ENCODE measurements at regions of chr12 and their contacts with region 1.

Region 1: GRCh38 chr12:46661110-46661845 is 164.5 kb downstream of the SLC38A4 start:
- DNase-seq: peak in 4 of 5 donors; percentile 48 to 55 (median 52)
- H3K4me3 ChIP-seq: no peak overlapping the region
- H3K4me3 Mint-ChIP-seq: no peak overlapping the region
- H3K27ac ChIP-seq: no peak overlapping the region
- H3K27ac Mint-ChIP-seq: peak overlapping the region in 1 of 7 donors; percentile 43
- H3K4me1 ChIP-seq: peaks cover 14% of the 10 kb centered on the region
- H3K4me1 Mint-ChIP-seq: peaks cover 16 to 27% (median 22%) of the 10 kb centered on the region in 4 donors
- H3K27me3 ChIP-seq: no peaks in the 10 kb centered on the region
- H3K27me3 Mint-ChIP-seq: no peaks in the 10 kb centered on the region

Region 2: GRCh38 chr12:46153268-46153872 is 507.9 kb before region 1 on chr12:
- CTCF ChIA-PET with region 1: interaction called, 3 read pairs
- POLR2A ChIA-PET with region 1: no interaction called
- intact Hi-C with region 1: loop called (anchors 1 kb)
- DNase-seq: peak in 4 of 5 donors; percentile 38 to 50 (median 45)
- H3K4me3 ChIP-seq: no peak overlapping the region
- H3K4me3 Mint-ChIP-seq: no peak overlapping the region
- H3K27ac ChIP-seq: no peak overlapping the region
- H3K27ac Mint-ChIP-seq: no peak overlapping the region
- H3K4me1 ChIP-seq: peaks cover 11% of the 10 kb centered on the region
- H3K4me1 Mint-ChIP-seq: peaks cover 0 to 11% (median 9%) of the 10 kb centered on the region in 4 donors
- H3K27me3 ChIP-seq: no peaks in the 10 kb centered on the region
- H3K27me3 Mint-ChIP-seq: peaks cover under 1 to 4% of the 10 kb centered on the region in 2 donors

Region 3: DNA sequence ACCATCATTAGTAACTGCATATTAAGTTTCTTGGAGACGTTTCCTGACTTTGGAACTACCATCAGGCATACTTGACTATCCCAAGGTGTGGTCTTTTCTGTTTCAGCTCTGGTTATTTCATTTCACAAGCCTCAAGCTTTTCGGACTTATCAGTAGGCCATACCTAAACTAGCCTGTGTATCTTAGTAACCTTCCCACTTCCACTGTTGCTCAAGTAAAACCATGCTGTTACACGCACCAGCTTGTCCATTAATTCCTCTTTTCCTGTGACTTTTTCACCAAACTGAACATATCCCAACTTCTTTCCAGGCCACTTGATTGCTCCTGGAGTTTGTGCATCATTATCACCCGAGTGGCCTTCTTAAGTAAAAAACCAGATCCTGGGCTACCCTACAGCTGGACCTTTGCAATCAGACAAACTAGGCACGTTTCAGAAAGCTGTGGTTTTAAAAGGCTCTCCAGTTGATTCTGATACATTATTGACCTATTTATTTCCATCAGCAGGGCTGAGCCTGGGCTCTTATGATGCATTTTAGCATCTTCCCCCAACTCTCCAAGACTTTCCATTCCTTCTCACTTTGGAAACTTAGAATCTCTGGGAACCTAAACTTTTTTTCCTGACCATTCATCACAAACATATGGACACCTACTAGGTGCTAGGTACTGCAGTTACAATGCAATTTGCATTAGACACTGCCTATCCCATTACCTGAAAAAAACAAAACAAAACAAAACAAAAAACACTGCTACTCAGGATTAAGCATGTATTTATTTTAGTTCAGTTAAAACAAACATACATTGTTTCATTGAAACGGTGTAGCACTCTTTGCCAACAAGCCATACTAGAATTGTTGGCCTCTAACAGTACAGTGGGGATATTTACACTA is 303.6 kb before region 1 on chr12:
- CTCF ChIA-PET with region 1: interaction called, 15 read pairs
- POLR2A ChIA-PET with region 1: interaction called, 4 read pairs
- intact Hi-C with region 1: loop called (anchors 1 kb)
- DNase-seq: no peak
- H3K4me3 ChIP-seq: no peak overlapping the region
- H3K4me3 Mint-ChIP-seq: no peak overlapping the region
- H3K27ac ChIP-seq: no peak overlapping the region
- H3K27ac Mint-ChIP-seq: peak overlapping the region in 5 of 7 donors; percentile 4 to 77 (median 5)
- H3K4me1 ChIP-seq: peaks cover 20% of the 10 kb centered on the region
- H3K4me1 Mint-ChIP-seq: peaks cover 13 to 48% (median 34%) of the 10 kb centered on the region in 4 donors
- H3K27me3 ChIP-seq: no peaks in the 10 kb centered on the region
- H3K27me3 Mint-ChIP-seq: no peaks in the 10 kb centered on the region

Region 4: DNA sequence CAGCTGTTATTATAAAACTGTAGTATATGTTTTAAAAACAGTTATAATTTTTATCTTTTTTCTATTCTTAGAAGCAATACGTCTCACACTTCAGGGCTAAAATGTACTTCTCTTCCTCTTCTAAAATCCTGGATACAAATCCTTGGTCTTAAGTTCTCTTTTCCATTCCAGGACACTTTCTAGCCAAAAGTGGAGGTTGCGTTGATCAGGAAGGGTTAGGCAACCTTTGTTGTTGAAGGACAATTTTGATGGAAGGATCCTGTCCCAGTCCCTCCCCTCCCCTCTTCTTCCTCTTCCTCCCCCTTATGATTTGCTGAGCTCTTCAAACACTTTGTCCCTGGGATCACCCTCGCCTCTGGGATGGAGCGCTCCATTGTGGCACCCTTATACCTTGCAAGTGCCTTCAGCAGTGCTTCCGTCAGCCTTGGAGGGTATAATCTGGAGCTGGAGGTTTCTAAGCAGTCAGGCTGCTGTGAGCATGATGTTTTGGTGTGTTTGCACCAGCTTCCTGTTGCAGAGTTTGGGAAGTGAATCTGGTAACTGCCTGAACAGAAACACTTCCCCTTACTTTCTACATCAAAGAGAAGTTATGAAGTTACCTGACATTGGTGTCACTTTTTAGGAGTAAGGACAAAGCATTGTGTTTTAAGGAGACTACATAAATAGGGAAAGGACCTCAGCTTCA is 201.3 kb before region 1 on chr12:
- CTCF ChIA-PET with region 1: interaction called, 5 read pairs
- POLR2A ChIA-PET with region 1: interaction called, 3 read pairs
- intact Hi-C with region 1: loop called (anchors 2 kb)
- DNase-seq: no peak
- H3K4me3 ChIP-seq: no peak overlapping the region
- H3K4me3 Mint-ChIP-seq: peak overlapping the region in 7 of 8 donors; percentile 78 to 92 (median 80)
- H3K27ac ChIP-seq: no peak overlapping the region
- H3K27ac Mint-ChIP-seq: peak overlapping the region; percentile 82 to 97 (median 94)
- H3K4me1 ChIP-seq: peaks cover 56% of the 10 kb centered on the region
- H3K4me1 Mint-ChIP-seq: peaks cover 43 to 63% (median 54%) of the 10 kb centered on the region in 4 donors
- H3K27me3 ChIP-seq: no peaks in the 10 kb centered on the region
- H3K27me3 Mint-ChIP-seq: no peaks in the 10 kb centered on the region

Region 5: DNA sequence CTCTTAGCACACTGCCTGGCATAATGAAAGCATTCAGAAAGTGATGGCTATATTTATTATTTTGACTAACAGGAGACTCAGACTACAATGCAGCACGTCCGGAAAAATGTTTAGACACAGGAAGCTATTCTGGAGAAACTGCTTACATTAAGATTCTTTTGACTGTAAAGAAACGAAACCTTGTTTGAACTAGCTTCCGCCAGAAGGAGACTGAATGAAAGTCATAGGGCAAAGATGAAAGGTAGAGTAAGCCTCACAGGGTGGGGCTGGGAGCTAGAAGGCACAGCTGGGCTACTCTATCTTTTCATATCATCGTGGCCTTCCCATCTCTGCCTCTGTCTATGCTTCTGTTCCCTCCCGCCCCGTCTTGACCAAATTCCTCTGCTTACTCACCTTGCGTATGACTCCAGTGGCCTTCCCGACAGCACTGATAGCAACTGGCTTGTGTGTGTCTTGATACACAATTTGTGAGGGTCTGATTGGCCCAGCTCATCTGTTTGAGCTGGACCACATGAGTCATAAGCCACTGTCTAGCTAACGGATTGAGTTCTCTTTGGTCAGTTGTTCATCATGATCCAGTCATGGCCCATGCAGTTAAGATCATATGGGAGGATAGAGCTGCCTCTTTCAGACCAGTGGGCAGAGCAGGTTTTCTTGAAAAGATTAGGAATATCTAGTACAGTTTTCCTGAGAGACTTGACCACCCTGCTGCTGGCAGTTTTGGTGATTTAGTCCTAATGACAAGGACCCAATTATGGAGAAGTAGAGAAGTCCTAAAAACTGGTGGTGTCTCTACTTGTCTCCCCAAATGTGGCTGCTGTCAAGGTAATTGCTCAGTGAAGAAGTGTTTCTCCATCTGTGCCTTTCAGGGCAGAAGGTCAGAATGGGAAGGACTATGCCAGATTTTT is 137.2 kb before region 1 on chr12:
- CTCF ChIA-PET with region 1: interaction called, 10 read pairs
- POLR2A ChIA-PET with region 1: interaction called, 5 read pairs
- intact Hi-C with region 1: loop called (anchors 5 kb)
- DNase-seq: peak; percentile 52 to 65 (median 56)
- H3K4me3 ChIP-seq: peak overlapping the region in 1 of 2 donors; percentile 21
- H3K4me3 Mint-ChIP-seq: peak overlapping the region; percentile 64 to 79 (median 78)
- H3K27ac ChIP-seq: peak overlapping the region; percentile 51
- H3K27ac Mint-ChIP-seq: peak overlapping the region; percentile 66 to 95 (median 94)
- H3K4me1 ChIP-seq: peaks cover 18% of the 10 kb centered on the region
- H3K4me1 Mint-ChIP-seq: peaks cover 17 to 32% (median 25%) of the 10 kb centered on the region in 4 donors
- H3K27me3 ChIP-seq: no peaks in the 10 kb centered on the region
- H3K27me3 Mint-ChIP-seq: no peaks in the 10 kb centered on the region

Measured in CD4-positive, alpha-beta memory T cell (primary cell).